ENCODE measurements at regions of chr3 and their contacts with region 1.

Region 1: DNA sequence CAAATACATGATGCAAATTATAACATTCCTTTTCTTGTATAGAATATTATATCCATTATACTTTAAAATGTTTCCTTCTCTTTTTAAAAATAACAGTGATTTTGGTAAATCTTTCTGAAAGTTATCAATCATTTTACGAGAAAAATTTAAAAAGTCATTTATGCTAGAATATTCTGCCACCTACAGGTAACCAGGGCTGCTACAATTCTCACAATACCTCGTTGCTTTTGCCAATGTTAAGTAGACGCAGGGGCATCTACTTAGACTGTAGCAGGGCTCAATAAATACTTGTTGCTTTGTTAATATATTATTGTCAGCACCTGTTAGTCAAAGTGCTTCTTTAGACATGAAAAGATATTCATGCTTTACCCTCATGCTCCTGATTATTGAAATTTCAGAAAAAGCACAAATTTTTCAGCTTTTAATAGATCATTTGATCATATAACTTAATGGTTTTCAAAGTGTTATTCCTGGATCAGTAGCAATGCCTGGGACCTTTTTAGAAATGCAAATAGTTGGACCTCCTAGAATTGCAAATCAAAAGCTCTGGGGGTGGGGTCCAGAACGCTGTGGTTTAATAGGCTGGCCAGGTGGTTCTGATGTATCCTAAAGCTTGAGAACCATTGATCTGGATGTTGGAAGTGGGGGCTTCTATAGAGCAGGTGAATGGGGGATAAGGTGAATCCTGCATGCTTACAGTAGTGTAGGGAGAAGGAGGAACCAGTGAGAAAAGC is 223.6 kb upstream of the PDZRN3 start:
- DNase-seq: peak; percentile 3
- ATAC-seq: 0 out of 3 replicates have a peak, but pooled peaks have one; percentile 45
- H3K4me3 ChIP-seq: no peak overlapping the region
- H3K27ac ChIP-seq: no peak overlapping the region
- H3K4me1 ChIP-seq: no peaks in the 10 kb centered on the region
- H3K27me3 ChIP-seq: no peaks in the 10 kb centered on the region
- CTCF ChIP-seq: peak; percentile 43
- EP300 ChIP-seq: no peak
- POLR2A ChIP-seq: no peak
- RAD21 ChIP-seq: no peak

Region 2: DNA sequence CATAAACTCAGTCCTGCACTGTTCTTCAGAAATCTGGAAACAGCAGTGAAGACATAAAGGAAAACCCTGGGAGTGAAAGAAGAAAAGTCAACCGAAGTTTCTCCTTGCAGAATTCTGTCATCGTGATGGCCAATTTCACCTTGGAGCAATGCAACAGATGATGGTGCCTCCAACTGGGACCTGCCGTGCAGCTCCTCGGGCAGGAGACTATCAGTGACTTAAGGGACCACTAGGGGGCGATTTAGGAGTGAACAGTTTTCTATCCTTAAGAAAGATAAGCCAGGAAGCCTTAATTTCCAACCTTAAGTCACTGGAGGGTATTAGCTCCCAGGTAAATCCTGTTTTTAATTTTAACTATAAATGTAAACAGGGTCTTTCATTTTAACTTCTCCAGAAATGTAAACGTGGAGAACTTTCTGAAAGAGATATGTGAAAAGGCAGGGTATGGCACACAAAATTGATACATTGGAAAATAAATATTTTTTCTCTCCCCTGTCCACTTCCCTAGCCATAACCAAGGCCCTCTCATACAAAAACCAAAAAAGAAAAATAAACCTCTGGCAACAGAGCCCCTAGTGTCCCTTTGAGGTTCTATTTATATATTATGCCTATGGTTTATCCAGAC is 339.9 kb before region 1 on chr3:
- CTCF ChIA-PET with region 1: interaction called, 7 read pairs
- POLR2A ChIA-PET with region 1: no interaction called
- in situ Hi-C with region 1: loop called (anchors 5 kb)
- intact Hi-C with region 1: no loop called
- DNase-seq: peak; percentile 44
- ATAC-seq: peak; percentile 89
- H3K4me3 ChIP-seq: no peak overlapping the region
- H3K27ac ChIP-seq: no peak overlapping the region
- H3K4me1 ChIP-seq: peaks cover 9% of the 10 kb centered on the region
- H3K27me3 ChIP-seq: no peaks in the 10 kb centered on the region; a peak in 3 of 5 replicates
- CTCF ChIP-seq: peak; percentile 72
- EP300 ChIP-seq: no peak
- POLR2A ChIP-seq: no peak
- RAD21 ChIP-seq: peak; percentile 31; the same call in 1 of the 2 replicates